Posterior cingulate gyrus (tissue), 11 donors: ENCODE measurements at regions of chr19 and their contacts with region 1.

Region 1: GRCh38 chr19:35612559-35613321 is at the start of gene HAUS5:
- DNase-seq: peak; percentile 85 to 99 (median 93)

Region 2: DNA sequence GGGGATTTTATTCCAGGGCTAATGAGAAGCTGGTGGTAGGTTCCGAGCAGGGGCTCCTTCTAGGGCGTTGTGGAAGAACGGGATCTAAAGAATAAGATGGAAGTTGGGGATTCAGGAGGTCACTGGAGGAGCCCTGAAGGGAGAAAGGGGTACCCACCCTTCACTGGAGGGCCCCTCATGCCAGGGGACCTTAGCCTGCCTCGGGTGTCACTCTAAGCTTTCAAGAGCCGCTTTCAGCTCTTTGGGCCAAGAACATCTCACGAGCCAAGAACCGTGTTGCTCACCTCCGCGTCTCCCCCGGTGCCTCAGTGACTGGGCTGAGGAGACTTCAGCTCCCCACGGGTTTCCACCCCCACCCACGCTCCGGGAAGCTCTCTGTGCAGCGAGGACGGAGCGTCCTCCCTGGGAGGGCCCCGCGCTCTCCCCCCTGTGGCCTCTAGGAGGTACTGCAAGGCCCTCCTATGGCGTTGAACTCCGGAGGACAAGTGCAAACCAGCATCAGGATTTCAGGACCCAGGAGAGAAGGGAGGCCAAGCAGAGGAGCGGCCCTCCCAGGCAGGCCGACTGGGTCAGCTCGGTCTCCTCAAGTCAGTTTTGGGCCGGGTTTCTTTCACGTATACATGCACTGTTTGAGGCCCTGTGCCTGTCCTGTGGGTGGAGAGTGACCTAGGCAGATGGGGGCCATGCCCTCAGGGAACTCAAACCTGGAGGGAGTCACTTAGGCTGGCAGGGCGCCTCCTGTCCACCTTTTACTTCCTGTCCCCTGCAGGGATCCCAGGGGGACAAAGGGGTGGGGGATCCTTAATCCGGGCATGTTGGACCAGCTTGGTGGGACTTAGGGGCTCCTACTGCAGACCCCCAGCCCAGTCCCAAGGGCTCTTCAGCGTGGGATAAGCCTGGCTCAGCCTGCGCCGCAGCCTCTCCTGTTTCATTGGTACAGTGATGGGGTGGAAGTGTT is 117.4 kb before region 1 on chr19:
- intact Hi-C with region 1: no loop called
- DNase-seq: peak; percentile 32 to 96 (median 67)

Region 3: DNA sequence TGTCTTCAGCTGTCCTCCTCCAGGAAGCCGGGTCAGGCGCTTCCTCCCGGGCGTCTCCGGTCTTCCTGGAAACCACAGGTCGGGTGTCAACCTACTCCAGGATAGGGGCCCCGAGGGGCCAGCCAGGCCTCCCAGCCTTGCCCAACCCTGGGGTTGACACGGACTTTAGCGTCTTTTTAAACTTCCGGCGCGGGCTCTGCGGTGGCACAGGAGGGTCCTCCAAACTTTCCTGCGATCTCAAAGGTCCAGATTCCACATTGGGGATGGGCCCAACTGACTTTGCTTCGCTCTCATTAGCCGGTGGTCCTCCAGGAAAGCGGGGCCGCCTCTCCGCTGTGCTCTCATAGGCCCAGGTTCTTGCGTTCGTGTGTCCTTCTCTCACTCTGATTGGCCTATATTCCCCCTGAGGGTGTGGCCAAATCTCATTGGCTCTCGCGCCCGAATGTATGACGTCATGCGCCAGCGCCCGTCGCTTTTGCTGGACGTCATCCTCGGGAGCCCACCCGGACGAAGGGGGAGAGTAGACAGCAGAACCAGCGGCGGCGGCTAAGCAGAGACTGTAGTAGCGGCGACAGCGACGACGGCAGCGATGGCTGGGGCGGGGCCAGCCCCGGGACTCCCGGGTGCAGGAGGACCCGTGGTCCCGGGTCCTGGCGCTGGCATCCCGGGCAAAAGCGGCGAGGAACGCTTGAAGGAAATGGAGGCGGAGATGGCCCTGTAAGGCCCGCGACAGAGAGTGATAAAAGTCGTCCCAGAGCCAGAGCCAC is 16.0 kb after region 1 on chr19 and contains the start of gene RBM42:
- intact Hi-C with region 1: loop called (anchors 2 kb)
- DNase-seq: peak; percentile 90 to 99 (median 94)

Region 4: GRCh38 chr19:35716801-35717666 is 104.3 kb after region 1 on chr19:
- intact Hi-C with region 1: no loop called
- DNase-seq: peak; percentile 83 to 99 (median 94)